ENCODE measurements at regions of chr9 and their contacts with region 1.

Region 1: GRCh38 chr9:128863647-128864046 is 18.1 kb downstream of the KYAT1 start:
- DNase-seq: peak; percentile 51 to 84
- H3K4me3 ChIP-seq: no peak overlapping the region
- H3K27ac ChIP-seq: peak overlapping the region; percentile 2 to 18
- H3K4me1 ChIP-seq: peaks cover 0 to 36% (median 23%) of the 10 kb centered on the region in 4 donors
- H3K27me3 ChIP-seq: no peaks in the 10 kb centered on the region
- CTCF ChIP-seq: peak; percentile 93 to 96

Region 2: DNA sequence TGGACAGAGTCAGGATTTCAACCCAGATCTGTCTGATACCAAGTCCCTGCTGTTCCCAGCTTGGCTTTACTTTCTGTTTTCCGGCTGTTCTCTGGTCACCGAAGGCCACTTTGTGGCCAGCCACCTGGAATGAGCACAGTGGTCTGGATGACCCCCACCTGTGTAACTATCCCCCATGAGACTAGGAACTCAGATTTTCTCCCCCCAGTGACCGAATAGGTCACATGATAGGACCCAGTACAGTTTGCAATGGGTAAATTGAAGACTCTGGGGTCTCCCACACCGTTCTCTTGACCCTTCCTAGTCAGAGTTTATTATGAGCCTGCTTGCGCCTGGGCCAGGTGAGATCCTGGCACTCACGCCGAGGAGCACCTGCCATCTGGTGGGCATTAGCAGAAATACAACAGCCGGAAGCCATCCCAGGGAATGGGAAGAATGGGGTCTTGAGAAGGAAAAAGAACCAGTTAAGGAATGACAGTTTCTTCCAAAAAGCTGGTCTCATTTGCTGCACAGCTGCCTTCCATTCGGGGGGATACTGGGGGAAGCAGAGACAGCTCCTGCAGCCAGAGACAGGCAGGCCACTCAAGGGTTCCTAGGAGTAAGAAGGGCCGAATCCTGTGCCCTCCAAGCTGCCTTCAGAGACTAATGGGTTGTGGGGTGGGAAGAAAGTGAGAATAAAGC is 64.2 kb after region 1 on chr9:
- intact Hi-C with region 1: loop called (anchors 2 kb)
- DNase-seq: no peak
- H3K4me3 ChIP-seq: no peak overlapping the region
- H3K27ac ChIP-seq: peak overlapping the region in 1 of 2 donors; percentile 2
- H3K4me1 ChIP-seq: peaks cover 0 to 21% (median 13%) of the 10 kb centered on the region in 4 donors
- H3K27me3 ChIP-seq: no peaks in the 10 kb centered on the region
- CTCF ChIP-seq: peak; percentile 86 to 91

Region 3: DNA sequence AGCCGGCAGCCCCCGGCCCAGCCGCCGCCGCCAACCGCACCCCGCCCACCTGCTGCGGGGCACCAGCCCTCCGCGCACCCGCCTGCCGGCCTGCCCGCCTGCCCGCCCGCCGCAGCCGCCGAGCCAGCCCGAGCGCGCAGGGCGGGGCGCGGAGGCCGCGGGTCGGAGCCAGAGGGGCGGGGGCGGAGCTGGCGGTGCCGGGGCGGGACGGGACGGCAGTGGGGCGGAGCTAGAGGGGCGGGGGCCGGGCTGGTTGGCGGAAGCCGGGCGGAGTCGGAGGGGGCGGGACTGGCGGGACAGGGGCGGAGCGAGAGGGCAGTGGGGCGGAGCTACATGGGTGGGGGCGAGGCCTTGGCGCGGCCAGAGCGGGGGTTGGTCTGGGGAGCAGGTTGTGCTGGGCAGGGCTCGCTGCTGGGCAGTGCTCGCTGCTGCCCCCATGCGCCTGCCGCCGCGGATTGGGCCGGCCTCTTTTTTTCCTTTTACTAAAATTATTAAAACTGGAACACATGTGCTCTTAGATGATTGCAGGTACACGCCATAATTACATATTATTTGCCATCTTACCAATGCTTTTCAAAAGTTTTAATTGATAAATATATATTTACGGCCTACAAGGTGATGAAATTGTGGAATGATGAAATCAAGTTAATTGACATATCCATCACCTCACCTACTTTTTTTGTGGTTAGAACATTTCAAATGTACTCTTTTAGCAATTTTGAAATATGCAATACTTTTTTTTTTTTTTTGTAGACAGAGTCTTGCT is 164.7 kb after region 1 on chr9 and contains the start of gene SH3GLB2:
- intact Hi-C with region 1: loop called (anchors 10 kb)
- DNase-seq: peak; percentile 91 to 98
- H3K4me3 ChIP-seq: peak within 1 kb of the TSS; percentile 87 to 89
- H3K27ac ChIP-seq: peak within 1 kb of the TSS; percentile 72 to 74
- H3K4me1 ChIP-seq: peaks cover 0 to 29% (median 22%) of the 10 kb centered on the region in 4 donors
- H3K27me3 ChIP-seq: no peaks in the 10 kb centered on the region
- CTCF ChIP-seq: peak; percentile 69 to 91

Region 4: DNA sequence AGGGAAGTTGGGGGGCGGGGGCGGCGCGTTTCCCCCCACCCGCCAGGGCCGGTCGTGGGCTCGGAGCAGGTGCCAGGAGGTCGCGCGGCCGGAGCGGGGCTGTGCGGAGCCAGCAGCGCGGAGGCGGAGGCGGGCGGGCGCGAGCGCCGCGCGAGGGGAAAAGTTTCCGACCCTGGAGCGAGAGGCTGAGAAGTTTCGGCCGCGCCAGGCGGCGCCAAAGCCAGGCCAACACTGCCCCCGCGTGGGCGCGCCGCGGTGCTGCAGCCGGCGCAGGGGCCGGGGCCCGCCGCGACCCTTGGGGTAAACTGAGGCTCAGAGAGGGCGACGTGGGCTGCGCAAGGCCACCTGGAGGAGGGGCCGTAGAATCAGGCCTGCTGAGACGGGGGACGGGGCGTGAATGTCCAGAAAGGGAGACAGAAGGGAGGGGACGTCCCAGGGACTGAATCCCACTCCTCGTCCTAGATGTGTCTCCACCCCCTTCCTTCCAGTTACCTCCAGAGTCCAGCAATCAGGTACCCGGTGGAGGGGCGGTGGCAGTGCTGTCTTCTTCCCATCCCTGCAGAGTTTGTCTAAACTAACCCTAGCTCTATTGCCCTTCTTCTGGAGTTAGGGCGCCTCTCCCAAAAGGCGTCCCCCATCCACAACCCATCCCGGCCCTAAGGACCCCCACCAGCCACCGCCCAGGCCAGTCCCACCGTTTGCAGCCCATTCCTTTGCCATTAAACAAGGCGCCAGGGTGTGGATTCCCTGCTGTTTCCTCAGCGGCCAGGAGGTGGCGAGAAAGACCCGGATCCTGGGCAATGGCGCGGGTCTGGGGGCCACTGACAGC is 747.0 kb after region 1 on chr9:
- intact Hi-C with region 1: no loop called
- DNase-seq: peak; percentile 73 to 87
- H3K4me3 ChIP-seq: peak overlapping the region; percentile 66 to 89
- H3K27ac ChIP-seq: peak overlapping the region; percentile 94 to 95
- H3K4me1 ChIP-seq: peaks cover 0 to 52% (median 44%) of the 10 kb centered on the region in 4 donors
- H3K27me3 ChIP-seq: no peaks in the 10 kb centered on the region
- CTCF ChIP-seq: peak; percentile 87 to 100

Measured in tibial artery (tissue), 4 donors.